Kidney (tissue), 22 donors: ENCODE measurements at regions of chr2 and their contacts with region 1.

Region 1: GRCh38 chr2:191688934-191689695 is 11.2 kb downstream of the NABP1 start:
- DNase-seq: peak in 2 of 5 donors; percentile 82 to 83
- H3K4me3 ChIP-seq: peak overlapping the region in 1 of 3 donors; percentile 3
- H3K27ac ChIP-seq: peak overlapping the region; percentile 53 to 68
- H3K4me1 ChIP-seq: peaks cover 0 to 27% (median 2%) of the 10 kb centered on the region in 3 donors
- H3K27me3 ChIP-seq: no peaks in the 10 kb centered on the region
- CTCF ChIP-seq: no peak

Region 2: DNA sequence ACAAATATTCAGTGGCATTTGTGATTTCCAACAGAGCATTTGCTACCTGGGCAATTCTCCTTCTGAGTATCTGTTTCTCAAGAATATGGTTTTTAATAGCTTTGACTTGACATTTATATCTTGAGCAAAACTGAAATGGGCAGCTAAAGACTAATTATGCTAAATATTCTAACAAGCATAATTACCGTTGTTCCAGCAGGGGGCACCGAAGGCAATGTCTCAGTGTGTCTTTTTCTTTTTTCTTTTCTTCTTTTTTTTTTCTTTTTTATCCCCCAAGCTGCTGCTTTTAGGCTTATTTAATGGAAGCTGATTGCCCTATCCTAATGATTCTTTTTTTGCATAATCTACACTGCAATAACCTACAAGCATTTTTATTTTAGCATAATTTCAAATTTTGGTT is 150.0 kb before region 1 on chr2:
- intact Hi-C with region 1: no loop called
- DNase-seq: peak in 2 of 5 donors; percentile 38 to 76
- H3K4me3 ChIP-seq: no peak overlapping the region
- H3K27ac ChIP-seq: no peak overlapping the region
- H3K4me1 ChIP-seq: no peaks in the 10 kb centered on the region
- H3K27me3 ChIP-seq: no peaks in the 10 kb centered on the region
- CTCF ChIP-seq: peak; percentile 29

Region 3: DNA sequence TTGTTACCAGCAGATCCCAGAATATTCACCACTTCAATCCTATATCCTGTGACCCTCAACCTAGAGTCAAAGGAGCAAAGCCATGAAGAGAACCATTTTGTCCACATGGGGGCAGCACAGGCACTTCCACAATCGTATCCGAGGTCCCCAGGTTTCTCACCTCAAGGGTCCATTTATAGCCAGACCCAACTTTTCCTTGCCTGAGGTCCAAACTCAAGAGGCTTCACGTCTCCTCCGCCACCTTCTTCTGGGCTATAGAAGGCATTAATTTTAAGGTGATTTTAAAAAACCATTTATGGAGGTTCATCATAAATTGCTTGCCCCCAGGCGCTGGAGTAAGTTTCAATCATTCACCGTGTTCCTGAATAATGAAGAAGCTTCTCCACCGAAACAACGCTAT is 122.8 kb before region 1 on chr2:
- intact Hi-C with region 1: loop called (anchors 5 kb)
- DNase-seq: peak in 4 of 5 donors; percentile 58 to 75 (median 66)
- H3K4me3 ChIP-seq: no peak overlapping the region
- H3K27ac ChIP-seq: no peak overlapping the region
- H3K4me1 ChIP-seq: no peaks in the 10 kb centered on the region
- H3K27me3 ChIP-seq: no peaks in the 10 kb centered on the region
- CTCF ChIP-seq: peak; percentile 80

Region 4: DNA sequence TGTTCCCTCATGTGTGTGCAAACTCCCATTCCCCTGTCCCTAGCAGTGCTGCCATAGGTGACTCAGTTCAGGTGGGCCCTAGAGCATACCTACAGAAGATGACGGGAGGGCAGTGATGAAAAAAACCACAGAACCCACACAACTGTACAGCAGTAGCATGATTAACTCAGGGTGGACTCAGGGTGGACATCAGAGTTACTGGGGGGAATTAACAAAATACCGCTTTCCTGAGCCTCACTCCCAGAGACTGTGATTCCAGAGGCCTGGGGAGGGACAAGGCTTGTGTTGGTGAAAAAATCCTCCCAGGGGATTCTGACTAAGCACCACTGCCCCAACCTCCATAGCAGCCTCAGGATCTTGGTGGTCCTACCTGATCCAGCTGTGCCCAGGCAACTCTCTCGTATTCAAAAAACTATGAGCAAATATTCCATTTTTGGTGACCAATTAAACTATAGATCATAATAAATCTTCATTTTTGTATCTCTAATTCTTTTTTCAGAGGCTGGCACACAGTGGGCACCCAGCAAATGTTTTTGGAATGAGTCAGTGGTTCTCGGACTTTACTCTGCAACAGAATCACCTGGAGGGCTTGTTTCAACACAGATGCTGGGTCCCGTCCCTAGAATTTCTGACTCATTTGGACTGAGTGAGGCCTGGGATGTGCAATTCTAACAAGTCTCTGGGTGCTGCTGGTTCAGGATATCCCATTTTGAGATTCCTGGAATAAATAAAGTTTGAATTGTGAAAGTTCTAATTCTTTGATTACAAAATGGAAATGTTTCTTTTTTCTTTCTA is 95.3 kb before region 1 on chr2:
- intact Hi-C with region 1: no loop called
- DNase-seq: no peak
- H3K4me3 ChIP-seq: no peak overlapping the region
- H3K27ac ChIP-seq: no peak overlapping the region
- H3K4me1 ChIP-seq: no peaks in the 10 kb centered on the region
- H3K27me3 ChIP-seq: no peaks in the 10 kb centered on the region
- CTCF ChIP-seq: no peak